Gastrocnemius medialis (tissue), 4 donors: ENCODE measurements at regions of chr1 and their contacts with region 1.

Region 1: DNA sequence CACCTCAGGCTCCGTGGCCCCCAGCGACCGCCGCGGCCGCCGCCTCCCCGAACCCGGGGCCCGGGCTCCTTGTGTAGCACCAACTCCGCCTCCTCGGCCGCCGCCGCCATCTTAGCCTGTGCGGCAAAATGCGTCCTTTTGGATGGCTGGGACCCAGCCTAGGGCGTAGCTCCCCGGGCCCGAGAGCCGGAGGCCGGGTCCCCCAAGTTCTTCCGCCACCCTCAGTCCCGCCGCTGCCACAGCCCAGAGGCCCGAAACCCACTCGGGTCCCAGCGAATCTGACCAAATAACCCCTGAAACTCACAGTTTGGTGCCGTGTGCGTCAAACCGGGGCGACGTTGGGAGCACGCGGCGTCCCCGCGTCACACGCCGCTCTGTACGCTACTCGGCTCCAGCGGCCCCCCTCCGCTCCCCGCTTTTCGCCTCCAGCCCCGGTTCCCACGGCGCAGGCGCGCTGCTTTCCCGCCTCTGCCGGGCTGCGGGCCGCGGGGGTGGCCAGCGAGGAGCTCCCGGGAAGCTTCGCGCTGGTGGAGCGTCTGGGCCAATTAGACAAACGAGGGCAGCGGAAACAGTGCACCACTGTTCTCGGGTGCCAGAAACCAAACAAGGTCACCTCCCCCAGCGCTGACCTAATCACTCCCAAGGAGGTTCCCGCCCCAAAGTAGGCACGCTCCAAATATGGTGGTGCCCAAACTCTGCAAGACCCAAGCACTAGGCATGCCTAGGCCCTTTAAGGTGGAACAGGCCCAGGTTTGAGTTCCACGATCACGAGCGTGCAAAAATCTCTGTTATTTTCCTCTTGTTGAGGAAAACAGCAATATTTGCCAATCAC is at the start of gene ZNF644:
- DNase-seq: peak; percentile 78 to 90
- ATAC-seq: peak; percentile 86 to 87
- H3K4me3 ChIP-seq: peak within 1 kb of the TSS; percentile 74 to 94 (median 82)
- H3K27ac ChIP-seq: peak within 1 kb of the TSS; percentile 93 to 99 (median 96)
- H3K4me1 ChIP-seq: peaks cover 46 to 47% of the 10 kb centered on the region in 2 donors
- H3K27me3 ChIP-seq: no peaks in the 10 kb centered on the region
- CTCF ChIP-seq: no peak
- POLR2A ChIP-seq: peak; percentile 75 to 82
- total RNA-seq, gene ZNF644: 30.5 to 61.7 (median 34.6) TPM

Region 2: GRCh38 chr1:90850898-90851710 is 170.8 kb before region 1 on chr1:
- in situ Hi-C with region 1: no loop called
- intact Hi-C with region 1: loop called (anchors 5 kb)
- DNase-seq: peak; percentile 65 to 67
- ATAC-seq: peak; percentile 89 to 95
- H3K4me3 ChIP-seq: peak overlapping the region; percentile 79 to 100 (median 83)
- H3K27ac ChIP-seq: peak overlapping the region; percentile 62 to 75 (median 63)
- H3K4me1 ChIP-seq: peaks cover 0 to 7% of the 10 kb centered on the region in 2 donors
- H3K27me3 ChIP-seq: no peaks in the 10 kb centered on the region
- CTCF ChIP-seq: peak in 4 of 5 experiments; percentile 40 to 91 (median 65)
- POLR2A ChIP-seq: peak in 1 of 2 donors; percentile 32

Region 3: DNA sequence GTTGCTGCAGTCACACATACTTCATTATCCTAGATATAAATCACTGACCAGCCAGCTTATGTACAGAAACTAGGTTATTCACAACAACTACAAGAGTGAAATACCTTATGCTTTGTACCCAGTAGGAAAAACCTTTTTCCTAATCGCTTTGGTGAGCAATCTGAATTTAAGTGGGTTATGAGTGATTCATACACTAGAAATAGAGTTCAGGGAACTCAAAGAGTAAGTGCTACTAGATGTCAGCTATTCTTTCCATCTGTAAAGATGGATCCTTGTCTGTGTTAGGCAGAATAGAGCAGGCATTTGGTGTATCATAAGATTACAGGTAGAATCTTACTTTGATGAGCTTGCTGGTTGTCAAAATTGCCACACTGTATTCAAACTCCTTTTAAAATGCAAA is 102.0 kb before region 1 on chr1:
- in situ Hi-C with region 1: no loop called
- intact Hi-C with region 1: loop called (anchors 5 kb)
- DNase-seq: no peak
- ATAC-seq: peak; percentile 95 to 98
- H3K4me3 ChIP-seq: no peak overlapping the region
- H3K27ac ChIP-seq: peak overlapping the region; percentile 15 to 44 (median 30)
- H3K4me1 ChIP-seq: peaks cover 59 to 62% of the 10 kb centered on the region in 2 donors
- H3K27me3 ChIP-seq: no peaks in the 10 kb centered on the region
- CTCF ChIP-seq: no peak
- POLR2A ChIP-seq: no peak

Region 4: GRCh38 chr1:90964444-90965035 is 57.4 kb before region 1 on chr1:
- in situ Hi-C with region 1: no loop called
- intact Hi-C with region 1: loop called (anchors 2 kb)
- DNase-seq: no peak
- ATAC-seq: no peak
- H3K4me3 ChIP-seq: no peak overlapping the region
- H3K27ac ChIP-seq: no peak overlapping the region
- H3K4me1 ChIP-seq: peaks cover 39 to 42% of the 10 kb centered on the region in 2 donors
- H3K27me3 ChIP-seq: no peaks in the 10 kb centered on the region
- CTCF ChIP-seq: peak in 3 of 5 experiments; percentile 34 to 51 (median 43)
- POLR2A ChIP-seq: no peak

Region 5: GRCh38 chr1:91165033-91165654 is 143.2 kb after region 1 on chr1:
- in situ Hi-C with region 1: no loop called
- intact Hi-C with region 1: loop called (anchors 10 kb)
- DNase-seq: peak; percentile 27 to 47
- ATAC-seq: peak; percentile 56 to 87
- H3K4me3 ChIP-seq: no peak overlapping the region
- H3K27ac ChIP-seq: no peak overlapping the region
- H3K4me1 ChIP-seq: no peaks in the 10 kb centered on the region
- H3K27me3 ChIP-seq: no peaks in the 10 kb centered on the region
- CTCF ChIP-seq: peak; percentile 61 to 89 (median 78)
- POLR2A ChIP-seq: no peak

Region 6: DNA sequence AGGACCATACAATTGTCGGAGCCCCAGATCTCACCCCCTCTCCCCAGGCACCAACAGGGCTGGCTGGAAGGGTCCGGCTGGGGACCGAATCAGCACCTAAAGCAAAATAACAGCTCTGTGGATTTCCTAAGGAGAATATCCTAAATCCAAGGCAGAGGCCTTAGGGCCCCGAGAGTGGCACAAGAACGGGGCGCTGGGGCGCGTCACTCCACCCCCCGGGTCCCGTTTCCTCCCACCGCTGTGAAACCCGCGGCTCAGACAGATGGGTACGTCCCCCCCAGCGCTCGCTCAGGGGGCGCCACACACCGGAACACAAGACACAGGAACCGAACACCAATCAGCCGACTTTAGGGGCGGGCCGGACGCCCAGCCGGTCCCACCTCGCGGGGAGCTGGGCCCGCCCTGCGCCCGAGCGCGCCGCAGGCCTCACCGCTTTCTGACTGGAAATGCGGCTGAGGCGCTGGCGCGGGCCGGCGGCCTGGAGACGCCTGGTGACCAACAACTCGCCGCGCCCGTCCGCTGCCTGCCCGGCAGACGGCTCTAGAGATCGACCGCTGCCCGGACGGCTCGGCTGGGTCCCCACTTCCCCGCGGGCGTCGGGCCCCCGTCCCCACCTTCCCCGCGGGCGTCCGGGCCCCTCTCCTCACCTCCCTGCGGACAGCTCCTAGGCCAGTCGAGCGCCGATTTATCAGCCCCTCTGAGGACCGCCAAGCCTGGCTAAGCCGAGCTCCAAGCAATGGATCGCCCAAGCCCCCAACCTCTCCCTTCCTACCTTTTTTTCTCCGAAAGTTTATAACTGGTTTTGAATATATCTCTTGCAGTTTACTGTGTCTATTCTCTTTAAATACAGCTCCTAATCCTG is 382.5 kb after region 1 on chr1 and contains the start of gene HFM1:
- in situ Hi-C with region 1: no loop called
- intact Hi-C with region 1: loop called (anchors 5 kb)
- DNase-seq: peak; percentile 40 to 68
- ATAC-seq: peak; percentile 91 to 92
- H3K4me3 ChIP-seq: peak within 1 kb of the TSS; percentile 67 to 79 (median 74)
- H3K27ac ChIP-seq: peak within 1 kb of the TSS; percentile 84 to 93 (median 90)
- H3K4me1 ChIP-seq: peaks cover 0 to 4% of the 10 kb centered on the region in 2 donors
- H3K27me3 ChIP-seq: no peaks in the 10 kb centered on the region
- CTCF ChIP-seq: no peak
- POLR2A ChIP-seq: peak; percentile 41 to 53
- total RNA-seq, gene HFM1: 0.58 to 1.9 (median 1.4) TPM